CD4-positive, alpha-beta memory T cell (primary cell): ENCODE measurements at regions of chr6 and their contacts with region 1.

Region 1: DNA sequence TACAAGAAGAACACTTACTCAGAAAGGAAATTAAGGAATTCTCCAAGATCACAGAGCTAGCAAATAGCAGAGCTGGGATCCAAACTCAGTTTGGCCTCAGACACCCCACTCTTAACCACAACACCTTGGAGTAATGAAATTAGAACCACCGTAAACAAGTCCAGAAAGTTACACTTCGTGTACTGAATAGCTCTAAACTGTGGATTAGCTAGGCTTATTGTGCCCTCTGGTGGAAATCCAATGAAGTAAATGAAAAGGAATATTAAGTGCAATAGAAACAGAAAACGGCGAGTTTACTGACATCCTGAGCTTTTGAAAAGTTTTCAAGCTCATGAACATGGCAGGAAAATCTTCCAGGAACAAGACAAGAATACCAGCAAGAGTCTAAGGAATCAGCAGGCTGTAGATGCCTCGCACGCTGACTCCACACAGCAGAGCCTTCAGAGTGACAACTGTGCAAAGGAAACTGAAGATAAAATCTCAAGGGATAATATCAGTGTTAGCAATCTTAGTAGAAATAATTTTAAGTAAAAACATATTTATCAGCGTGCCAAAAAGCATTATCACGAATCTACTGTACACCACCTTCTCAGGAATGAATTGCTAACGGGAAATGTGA is 34.6 kb downstream of the FBXO5 start:
- DNase-seq: peak in 4 of 5 donors; percentile 22 to 42 (median 30)
- H3K4me3 ChIP-seq: no peak overlapping the region
- H3K4me3 Mint-ChIP-seq: peak overlapping the region in 4 of 8 donors; percentile 3 to 69 (median 44)
- H3K27ac ChIP-seq: no peak overlapping the region
- H3K27ac Mint-ChIP-seq: no peak overlapping the region
- H3K4me1 ChIP-seq: no peaks in the 10 kb centered on the region
- H3K4me1 Mint-ChIP-seq: peaks cover 7 to 9% (median 8%) of the 10 kb centered on the region in 4 donors
- H3K27me3 ChIP-seq: no peaks in the 10 kb centered on the region
- H3K27me3 Mint-ChIP-seq: peaks cover 9 to 13% of the 10 kb centered on the region in 2 donors

Region 2: GRCh38 chr6:151675746-151676416 is 1272.4 kb before region 1 on chr6:
- CTCF ChIA-PET with region 1: no interaction called
- POLR2A ChIA-PET with region 1: no interaction called
- intact Hi-C with region 1: loop called (anchors 5 kb)
- DNase-seq: peak; percentile 46 to 57 (median 48)
- H3K4me3 ChIP-seq: no peak overlapping the region
- H3K4me3 Mint-ChIP-seq: no peak overlapping the region
- H3K27ac ChIP-seq: no peak overlapping the region
- H3K27ac Mint-ChIP-seq: no peak overlapping the region
- H3K4me1 ChIP-seq: no peaks in the 10 kb centered on the region
- H3K4me1 Mint-ChIP-seq: peaks cover 0 to 2% (median under 1%) of the 10 kb centered on the region in 4 donors
- H3K27me3 ChIP-seq: no peaks in the 10 kb centered on the region
- H3K27me3 Mint-ChIP-seq: peaks cover 1 to 4% of the 10 kb centered on the region in 2 donors

Region 3: GRCh38 chr6:152552616-152553209 is 395.5 kb before region 1 on chr6:
- CTCF ChIA-PET with region 1: no interaction called
- POLR2A ChIA-PET with region 1: no interaction called
- intact Hi-C with region 1: loop called (anchors 2 kb)
- DNase-seq: peak in 1 of 5 donors; percentile 10
- H3K4me3 ChIP-seq: no peak overlapping the region
- H3K4me3 Mint-ChIP-seq: no peak overlapping the region
- H3K27ac ChIP-seq: no peak overlapping the region
- H3K27ac Mint-ChIP-seq: no peak overlapping the region
- H3K4me1 ChIP-seq: no peaks in the 10 kb centered on the region
- H3K4me1 Mint-ChIP-seq: no peaks in the 10 kb centered on the region
- H3K27me3 ChIP-seq: no peaks in the 10 kb centered on the region
- H3K27me3 Mint-ChIP-seq: peaks cover 0 to 8% of the 10 kb centered on the region in 2 donors

Region 4: DNA sequence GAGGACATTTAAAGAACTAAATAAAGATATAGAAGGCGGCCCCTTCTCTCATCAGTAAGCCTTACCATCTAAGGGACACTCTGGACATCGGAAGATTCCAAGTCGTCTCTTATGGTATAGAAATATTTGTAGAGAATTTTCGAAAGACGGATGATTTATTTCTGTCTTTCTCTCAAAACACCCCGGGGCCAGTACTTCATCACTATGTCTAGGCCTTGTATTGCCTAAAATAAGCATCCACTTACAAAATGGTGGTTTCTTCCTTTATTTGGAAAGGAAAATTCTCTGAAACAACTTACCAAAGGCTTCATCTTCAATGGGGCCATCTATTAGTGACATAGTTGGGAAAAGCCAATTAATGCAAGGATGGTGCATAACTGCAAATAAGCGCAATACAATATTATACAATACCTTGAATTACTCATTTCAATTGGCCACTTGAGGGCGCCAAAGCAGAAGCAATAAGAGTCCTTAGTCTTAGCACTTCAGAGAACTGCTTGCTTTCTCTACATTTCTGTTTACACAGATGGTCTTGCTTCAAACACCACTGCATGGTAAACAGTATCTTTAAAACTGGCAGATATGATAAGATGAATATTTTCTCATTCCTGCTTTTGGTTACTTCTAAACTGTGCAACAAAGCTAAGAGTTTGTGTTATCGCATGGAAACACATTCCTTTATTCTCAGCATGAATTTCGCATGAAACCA is 84.5 kb before region 1 on chr6:
- CTCF ChIA-PET with region 1: interaction called, 7 read pairs
- POLR2A ChIA-PET with region 1: no interaction called
- intact Hi-C with region 1: loop called (anchors 1 kb)
- DNase-seq: peak; percentile 48 to 64 (median 57)
- H3K4me3 ChIP-seq: no peak overlapping the region
- H3K4me3 Mint-ChIP-seq: no peak overlapping the region
- H3K27ac ChIP-seq: no peak overlapping the region
- H3K27ac Mint-ChIP-seq: no peak overlapping the region
- H3K4me1 ChIP-seq: no peaks in the 10 kb centered on the region
- H3K4me1 Mint-ChIP-seq: peaks cover 0 to 3% (median 1%) of the 10 kb centered on the region in 4 donors
- H3K27me3 ChIP-seq: no peaks in the 10 kb centered on the region
- H3K27me3 Mint-ChIP-seq: peaks cover 2 to 11% of the 10 kb centered on the region in 2 donors

Region 5: GRCh38 chr6:153023977-153024708 is 75.9 kb after region 1 on chr6:
- CTCF ChIA-PET with region 1: interaction called, 9 read pairs
- POLR2A ChIA-PET with region 1: no interaction called
- intact Hi-C with region 1: loop called (anchors 1 kb)
- DNase-seq: peak; percentile 40 to 61 (median 48)
- H3K4me3 ChIP-seq: no peak overlapping the region
- H3K4me3 Mint-ChIP-seq: no peak overlapping the region
- H3K27ac ChIP-seq: no peak overlapping the region
- H3K27ac Mint-ChIP-seq: no peak overlapping the region
- H3K4me1 ChIP-seq: no peaks in the 10 kb centered on the region
- H3K4me1 Mint-ChIP-seq: peaks cover 0 to 5% (median 1%) of the 10 kb centered on the region in 4 donors
- H3K27me3 ChIP-seq: no peaks in the 10 kb centered on the region
- H3K27me3 Mint-ChIP-seq: peaks cover 13 to 19% of the 10 kb centered on the region in 2 donors

Region 6: GRCh38 chr6:153210083-153210482 is 261.8 kb after region 1 on chr6:
- CTCF ChIA-PET with region 1: no interaction called
- POLR2A ChIA-PET with region 1: no interaction called
- intact Hi-C with region 1: no loop called
- DNase-seq: no peak
- H3K4me3 ChIP-seq: no peak overlapping the region
- H3K4me3 Mint-ChIP-seq: no peak overlapping the region
- H3K27ac ChIP-seq: no peak overlapping the region
- H3K27ac Mint-ChIP-seq: no peak overlapping the region
- H3K4me1 ChIP-seq: no peaks in the 10 kb centered on the region
- H3K4me1 Mint-ChIP-seq: no peaks in the 10 kb centered on the region
- H3K27me3 ChIP-seq: no peaks in the 10 kb centered on the region
- H3K27me3 Mint-ChIP-seq: peaks cover 0 to 2% of the 10 kb centered on the region in 2 donors